ENCODE measurements at regions of chr7 and their contacts with region 1.

Region 1: DNA sequence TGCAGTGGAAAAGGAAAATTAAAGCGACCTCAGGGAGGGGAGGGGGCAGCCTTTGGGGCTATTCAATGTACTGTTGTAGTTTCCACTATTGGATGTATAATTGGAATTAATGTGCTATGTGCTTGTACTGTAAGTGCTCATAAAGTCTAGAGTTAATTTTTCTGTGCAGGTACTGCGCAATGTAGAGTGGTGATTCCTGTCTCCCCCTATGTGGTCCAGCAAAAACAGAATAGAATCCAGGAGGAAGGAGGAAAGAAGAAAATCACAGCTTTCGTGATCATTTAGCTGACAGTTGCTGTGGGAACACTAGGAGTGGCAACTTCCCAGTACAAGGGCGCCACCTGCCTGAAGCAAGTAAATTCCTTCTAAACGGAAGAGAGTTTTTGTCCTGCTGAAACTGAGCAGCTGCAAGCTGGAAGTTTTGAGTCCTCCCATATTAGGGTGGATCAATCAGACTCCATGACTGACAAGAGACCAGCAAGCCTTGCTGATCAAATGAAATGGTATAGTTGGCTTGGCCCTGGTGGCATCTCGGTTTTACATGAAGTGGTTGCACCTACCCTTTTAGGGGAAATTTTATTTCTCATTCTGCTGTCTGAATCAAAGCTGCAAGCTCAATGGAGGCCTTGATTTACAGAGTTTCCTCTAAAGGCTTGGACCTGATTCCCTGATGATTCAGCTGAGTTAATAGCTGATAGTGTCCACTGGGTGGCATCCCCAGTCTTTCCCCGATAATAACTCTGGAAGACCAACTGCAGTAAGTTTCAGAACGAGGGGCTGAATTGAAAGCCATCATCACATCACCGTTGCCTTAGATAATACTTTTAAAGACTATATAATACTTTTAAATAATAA is 299.8 kb downstream of the HGF start:
- H3K4me3 ChIP-seq: no peak overlapping the region
- H3K27ac ChIP-seq: no peak overlapping the region
- H3K4me1 ChIP-seq: no peaks in the 10 kb centered on the region
- CTCF ChIP-seq: peak; percentile 77; the same call in 1 of the 2 replicates

Region 2: DNA sequence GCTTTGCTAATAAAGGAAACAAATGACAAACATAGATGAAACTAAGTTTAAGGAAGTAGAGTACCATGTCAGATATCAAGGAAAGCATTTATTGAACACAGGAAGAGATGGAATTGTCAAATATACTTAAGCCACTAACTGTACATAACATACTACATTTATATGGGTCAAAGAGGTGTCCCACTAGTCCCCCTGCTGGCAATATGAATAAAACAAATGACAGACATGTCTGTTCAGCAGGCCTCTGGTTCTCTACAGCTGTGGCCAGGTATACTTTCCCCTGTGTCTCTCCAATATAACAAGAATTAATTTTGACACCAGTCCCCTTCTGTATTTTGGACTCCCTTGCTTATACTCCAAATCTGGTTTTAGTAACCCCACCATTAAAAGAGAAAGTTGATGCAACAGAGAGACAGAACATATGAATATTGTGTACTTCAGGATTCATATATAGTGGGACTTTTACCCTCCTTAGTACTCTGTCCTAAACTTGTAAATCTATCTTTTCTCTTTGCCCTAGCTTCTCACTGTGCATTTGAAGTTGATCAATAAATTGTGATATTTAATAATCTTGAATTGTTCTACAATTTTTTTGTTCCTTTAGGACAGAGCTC is 788.7 kb before region 1 on chr7:
- CTCF ChIA-PET with region 1: interaction called, 10 read pairs
- POLR2A ChIA-PET with region 1: no interaction called
- H3K4me3 ChIP-seq: no peak overlapping the region
- H3K27ac ChIP-seq: no peak overlapping the region
- H3K4me1 ChIP-seq: no peaks in the 10 kb centered on the region
- CTCF ChIP-seq: no peak

Region 3: DNA sequence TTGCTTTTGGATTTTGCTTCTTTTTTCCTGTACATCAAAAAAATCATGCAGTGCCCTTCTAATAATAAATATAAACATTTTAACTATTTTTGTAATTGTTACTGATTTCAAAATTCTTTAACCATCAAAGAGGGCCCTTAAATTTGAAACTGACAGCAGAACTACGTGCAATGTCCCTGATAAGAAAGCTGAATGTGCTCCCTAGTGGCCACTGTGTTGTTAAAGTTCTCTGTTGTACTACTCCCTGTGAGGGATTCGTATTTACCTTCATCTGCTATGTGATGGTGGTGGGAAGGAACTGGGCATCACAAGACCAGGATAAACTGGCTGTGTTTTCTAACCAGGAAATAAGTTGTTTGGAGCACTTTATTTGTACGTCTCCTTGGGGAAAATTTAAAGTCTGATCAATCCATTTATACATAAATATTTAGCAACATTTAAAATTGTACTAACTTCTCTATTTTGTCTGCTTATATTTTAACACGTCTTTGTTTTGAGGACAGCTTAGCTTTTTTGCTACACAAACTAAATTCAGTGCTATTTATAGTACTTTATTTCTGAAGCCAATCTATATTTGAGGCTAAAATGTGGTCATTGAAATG is 22.6 kb before region 1 on chr7:
- CTCF ChIA-PET with region 1: no interaction called
- POLR2A ChIA-PET with region 1: no interaction called
- H3K4me3 ChIP-seq: no peak overlapping the region
- H3K27ac ChIP-seq: no peak overlapping the region
- H3K4me1 ChIP-seq: no peaks in the 10 kb centered on the region
- CTCF ChIP-seq: no peak

Region 4: GRCh38 chr7:81457852-81458522 is 12.1 kb before region 1 on chr7:
- CTCF ChIA-PET with region 1: interaction called, 13 read pairs
- POLR2A ChIA-PET with region 1: no interaction called
- H3K4me3 ChIP-seq: no peak overlapping the region
- H3K27ac ChIP-seq: no peak overlapping the region
- H3K4me1 ChIP-seq: no peaks in the 10 kb centered on the region
- CTCF ChIP-seq: no peak

Region 5: GRCh38 chr7:81627536-81628287 is 157.6 kb after region 1 on chr7:
- CTCF ChIA-PET with region 1: no interaction called
- POLR2A ChIA-PET with region 1: no interaction called
- H3K4me3 ChIP-seq: no peak overlapping the region
- H3K27ac ChIP-seq: no peak overlapping the region
- H3K4me1 ChIP-seq: no peaks in the 10 kb centered on the region
- CTCF ChIP-seq: no peak